Natural killer cell (primary cell): ENCODE measurements at regions of chr21 and their contacts with region 1.

Region 1: GRCh38 chr21:17819114-17819876 is at the start of gene C21orf91:
- DNase-seq: peak; percentile 82 to 92
- ATAC-seq: peak; percentile 87 to 94 (median 87)
- H3K4me3 ChIP-seq: peak within 1 kb of the TSS; percentile 72
- H3K4me3 Mint-ChIP-seq: peak within 1 kb of the TSS; percentile 92
- H3K27ac ChIP-seq: peak within 1 kb of the TSS; percentile 91
- H3K27ac Mint-ChIP-seq: peak within 1 kb of the TSS; percentile 94 to 99
- H3K4me1 ChIP-seq: peaks cover 6% of the 10 kb centered on the region
- H3K4me1 Mint-ChIP-seq: peaks cover 36 to 37% of the 10 kb centered on the region in 2 donors
- H3K27me3 ChIP-seq: no peaks in the 10 kb centered on the region
- H3K27me3 Mint-ChIP-seq: no peaks in the 10 kb centered on the region
- CTCF ChIP-seq: no peak
- total RNA-seq, gene C21orf91: 40.9 to 59.4 (median 46.4) TPM

Region 2: DNA sequence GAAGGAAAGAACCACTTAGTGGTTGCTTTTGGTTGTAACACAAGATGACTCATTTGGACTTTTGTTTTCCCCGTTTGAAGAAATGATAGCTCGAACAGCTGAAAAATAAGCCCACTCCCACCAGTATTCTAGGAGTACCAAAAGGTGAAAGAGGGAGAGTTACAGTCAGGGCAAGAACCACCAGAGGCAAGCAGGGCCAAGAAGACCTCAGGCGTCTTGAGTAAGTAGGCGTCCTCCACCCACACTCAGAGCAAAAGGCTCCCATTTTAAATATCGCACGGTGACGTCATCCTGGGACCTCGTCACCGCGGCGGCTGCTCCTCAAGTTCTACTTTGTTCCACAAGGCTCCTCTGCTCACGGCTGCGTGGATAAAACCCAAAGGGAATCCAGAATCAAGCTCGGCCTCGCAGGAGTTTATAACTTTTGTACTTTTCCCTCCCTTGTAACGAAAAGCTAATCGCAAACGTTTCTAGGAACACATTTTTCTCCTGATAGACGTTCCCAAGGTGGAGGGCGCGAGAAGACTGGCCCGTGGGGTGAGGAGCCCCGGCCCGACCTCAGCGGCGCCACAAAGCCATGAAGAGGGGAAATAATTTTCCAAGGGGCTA is 207.8 kb before region 1 on chr21:
- intact Hi-C with region 1: loop called (anchors 2 kb)
- DNase-seq: peak; percentile 74 to 92
- ATAC-seq: peak; percentile 57 to 71 (median 63)
- H3K4me3 ChIP-seq: peak overlapping the region; percentile 91
- H3K4me3 Mint-ChIP-seq: peak overlapping the region; percentile 95
- H3K27ac ChIP-seq: peak overlapping the region; percentile 77
- H3K27ac Mint-ChIP-seq: peak overlapping the region; percentile 91 to 99
- H3K4me1 ChIP-seq: peaks cover 19% of the 10 kb centered on the region
- H3K4me1 Mint-ChIP-seq: peaks cover 12 to 23% of the 10 kb centered on the region in 2 donors
- H3K27me3 ChIP-seq: no peaks in the 10 kb centered on the region
- H3K27me3 Mint-ChIP-seq: no peaks in the 10 kb centered on the region
- CTCF ChIP-seq: no peak

Region 3: DNA sequence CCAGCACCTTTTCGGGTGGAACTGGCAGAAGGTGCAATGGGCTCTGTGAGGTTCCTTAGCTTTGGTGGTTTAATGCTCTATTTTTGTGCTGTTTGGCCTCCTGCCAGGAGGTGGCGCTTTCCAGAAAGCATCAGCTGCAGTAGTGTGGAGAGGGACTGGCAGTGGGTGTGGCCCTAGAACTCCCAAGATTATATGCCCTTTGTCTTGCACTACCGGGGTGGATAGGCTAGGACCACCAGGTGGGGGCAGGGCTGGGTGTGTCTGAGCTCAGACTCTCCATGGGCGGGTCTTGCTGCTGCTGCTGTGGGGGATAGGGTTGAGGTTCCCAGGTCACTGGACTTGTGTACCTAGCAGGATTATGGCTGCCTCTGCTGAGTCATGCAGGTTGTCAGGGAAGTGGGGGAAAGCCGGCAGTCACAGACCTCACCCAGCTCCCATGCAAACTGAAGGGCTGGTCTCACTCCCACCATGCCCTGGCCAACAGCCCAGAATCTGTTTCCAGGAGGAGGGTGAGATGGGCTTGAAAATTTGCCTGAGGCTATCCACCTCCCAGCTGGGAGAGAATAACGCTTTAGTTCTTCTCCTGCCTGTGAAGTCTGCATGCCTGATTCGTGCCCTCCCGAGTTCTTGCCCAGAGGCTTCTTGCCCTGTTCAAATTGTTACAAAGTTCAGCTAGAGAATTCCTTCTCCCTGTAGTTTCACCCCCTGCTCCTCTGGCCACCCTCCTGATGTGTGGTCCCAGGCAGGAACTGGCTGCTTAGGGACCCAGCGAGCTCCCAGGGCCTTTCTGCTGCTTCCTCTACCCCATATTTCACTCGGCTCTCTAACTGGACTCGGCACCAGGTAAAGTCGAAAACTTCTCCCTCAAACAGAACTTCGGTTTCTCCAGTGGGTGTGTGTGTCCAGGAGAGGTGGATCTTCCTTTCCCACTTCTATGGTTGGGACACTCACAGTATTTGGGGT is 130.1 kb before region 1 on chr21:
- intact Hi-C with region 1: loop called (anchors 10 kb)
- DNase-seq: peak; percentile 49 to 51
- ATAC-seq: peak in 1 of 3 donors; percentile 32
- H3K4me3 ChIP-seq: no peak overlapping the region
- H3K4me3 Mint-ChIP-seq: no peak overlapping the region
- H3K27ac ChIP-seq: no peak overlapping the region
- H3K27ac Mint-ChIP-seq: no peak overlapping the region
- H3K4me1 ChIP-seq: peaks cover 7% of the 10 kb centered on the region
- H3K4me1 Mint-ChIP-seq: peaks cover 4 to 7% of the 10 kb centered on the region in 2 donors
- H3K27me3 ChIP-seq: no peaks in the 10 kb centered on the region
- H3K27me3 Mint-ChIP-seq: peaks cover 5 to 14% of the 10 kb centered on the region in 2 donors
- CTCF ChIP-seq: peak; percentile 58

Region 4: GRCh38 chr21:17780539-17780938 is 38.8 kb before region 1 on chr21:
- intact Hi-C with region 1: loop called (anchors 1 kb)
- DNase-seq: peak in 1 of 2 donors; percentile 86
- ATAC-seq: peak; percentile 53 to 75 (median 71)
- H3K4me3 ChIP-seq: no peak overlapping the region
- H3K4me3 Mint-ChIP-seq: peak overlapping the region; percentile 49
- H3K27ac ChIP-seq: peak overlapping the region; percentile 59
- H3K27ac Mint-ChIP-seq: peak overlapping the region; percentile 91 to 92
- H3K4me1 ChIP-seq: peaks cover 47% of the 10 kb centered on the region
- H3K4me1 Mint-ChIP-seq: peaks cover 77 to 78% of the 10 kb centered on the region in 2 donors
- H3K27me3 ChIP-seq: no peaks in the 10 kb centered on the region
- H3K27me3 Mint-ChIP-seq: no peaks in the 10 kb centered on the region
- CTCF ChIP-seq: no peak

Region 5: GRCh38 chr21:17793246-17794123 is 25.8 kb before region 1 on chr21:
- intact Hi-C with region 1: loop called (anchors 1 kb)
- DNase-seq: peak in 1 of 2 donors; percentile 65
- ATAC-seq: peak; percentile 72 to 79 (median 76)
- H3K4me3 ChIP-seq: peak overlapping the region; percentile 35
- H3K4me3 Mint-ChIP-seq: peak overlapping the region; percentile 83
- H3K27ac ChIP-seq: peak overlapping the region; percentile 81
- H3K27ac Mint-ChIP-seq: peak overlapping the region; percentile 82 to 91
- H3K4me1 ChIP-seq: peaks cover 14% of the 10 kb centered on the region
- H3K4me1 Mint-ChIP-seq: peaks cover 36 to 57% of the 10 kb centered on the region in 2 donors
- H3K27me3 ChIP-seq: no peaks in the 10 kb centered on the region
- H3K27me3 Mint-ChIP-seq: no peaks in the 10 kb centered on the region
- CTCF ChIP-seq: no peak